MCF 10A (cell line): ENCODE measurements at regions of chr5 and their contacts with region 1.

Region 1: GRCh38 chr5:63228144-63228543 is 649.5 kb downstream of the LRRC70 start:
- DNase-seq: no peak
- H3K4me3 Mint-ChIP-seq: no peak overlapping the region
- H3K27ac Mint-ChIP-seq: no peak overlapping the region
- H3K4me1 Mint-ChIP-seq: no peaks in the 10 kb centered on the region
- H3K27me3 Mint-ChIP-seq: no peaks in the 10 kb centered on the region
- CTCF ChIP-seq: no peak

Region 2: GRCh38 chr5:63401436-63402046 is 173.4 kb after region 1 on chr5:
- CTCF ChIA-PET with region 1: no interaction called
- POLR2A ChIA-PET with region 1: no interaction called
- intact Hi-C with region 1: no loop called
- DNase-seq: peak; percentile 77
- H3K4me3 Mint-ChIP-seq: no peak overlapping the region
- H3K27ac Mint-ChIP-seq: no peak overlapping the region
- H3K4me1 Mint-ChIP-seq: no peaks in the 10 kb centered on the region
- H3K27me3 Mint-ChIP-seq: peaks cover 12% of the 10 kb centered on the region
- CTCF ChIP-seq: peak; percentile 69

Region 3: DNA sequence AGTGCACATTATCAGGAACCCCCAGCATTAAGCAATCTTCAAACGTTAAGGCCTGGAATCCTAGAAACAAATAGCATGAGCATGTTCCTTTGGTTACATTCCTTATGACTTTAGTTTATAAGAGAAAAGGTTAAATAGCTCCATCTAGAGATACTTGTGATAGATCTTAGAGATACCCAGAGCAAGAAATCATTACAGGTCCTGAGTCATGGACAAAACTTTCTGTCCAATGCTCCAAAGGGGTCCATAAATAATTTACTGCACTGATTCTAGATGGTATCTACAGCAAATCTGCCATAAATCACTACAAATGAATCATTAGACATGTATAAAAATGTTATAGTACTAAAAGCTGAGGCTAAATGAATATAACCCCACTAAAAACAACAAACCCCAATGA is 594.5 kb after region 1 on chr5:
- CTCF ChIA-PET with region 1: no interaction called
- POLR2A ChIA-PET with region 1: no interaction called
- intact Hi-C with region 1: loop called (anchors 5 kb)
- DNase-seq: peak; percentile 1
- H3K4me3 Mint-ChIP-seq: no peak overlapping the region
- H3K27ac Mint-ChIP-seq: no peak overlapping the region
- H3K4me1 Mint-ChIP-seq: no peaks in the 10 kb centered on the region
- H3K27me3 Mint-ChIP-seq: no peaks in the 10 kb centered on the region
- CTCF ChIP-seq: peak; percentile 27